Left ventricle myocardium superior (tissue), 1 donor: ENCODE measurements at regions of chr1 and their contacts with region 1.

Region 1: GRCh38 chr1:34786521-34787325 is 5.7 kb downstream of the GJB3 start:
- DNase-seq: peak; percentile 76
- ATAC-seq: peak; percentile 78

Region 2: GRCh38 chr1:34726861-34727260 is 59.9 kb before region 1 on chr1:
- intact Hi-C with region 1: no loop called
- DNase-seq: no peak
- ATAC-seq: no peak

Region 3: DNA sequence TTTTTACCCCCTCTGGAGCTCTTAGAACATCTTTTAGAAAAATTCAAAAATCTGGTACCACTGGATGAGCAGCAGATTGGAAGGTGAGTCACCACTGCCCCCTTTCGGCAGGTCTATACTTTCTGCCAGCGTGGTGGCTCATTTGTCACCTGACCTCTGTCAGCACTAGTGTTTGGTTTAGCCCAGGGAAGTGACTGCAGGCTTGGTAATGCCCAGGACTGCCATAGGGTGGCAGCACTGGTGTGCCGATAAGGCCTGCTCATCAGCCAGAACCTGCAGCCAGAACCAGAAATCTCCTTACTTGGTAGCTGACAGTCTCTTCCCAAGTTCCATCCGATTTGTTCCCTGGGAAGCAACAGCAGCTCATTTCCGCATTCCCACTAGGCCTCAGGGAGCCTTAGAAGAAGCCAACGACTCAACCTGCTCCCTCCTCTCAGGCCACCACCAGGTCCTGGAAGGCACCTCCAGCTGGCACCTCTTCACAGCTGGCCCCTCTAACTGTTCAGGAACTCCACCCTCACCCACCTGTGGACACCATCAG is 66.0 kb after region 1 on chr1:
- intact Hi-C with region 1: loop called (anchors 5 kb)
- DNase-seq: peak; percentile 85
- ATAC-seq: peak; percentile 92